Ovary (tissue), 10 donors: ENCODE measurements at regions of chr5 and their contacts with region 1.

Region 1: DNA sequence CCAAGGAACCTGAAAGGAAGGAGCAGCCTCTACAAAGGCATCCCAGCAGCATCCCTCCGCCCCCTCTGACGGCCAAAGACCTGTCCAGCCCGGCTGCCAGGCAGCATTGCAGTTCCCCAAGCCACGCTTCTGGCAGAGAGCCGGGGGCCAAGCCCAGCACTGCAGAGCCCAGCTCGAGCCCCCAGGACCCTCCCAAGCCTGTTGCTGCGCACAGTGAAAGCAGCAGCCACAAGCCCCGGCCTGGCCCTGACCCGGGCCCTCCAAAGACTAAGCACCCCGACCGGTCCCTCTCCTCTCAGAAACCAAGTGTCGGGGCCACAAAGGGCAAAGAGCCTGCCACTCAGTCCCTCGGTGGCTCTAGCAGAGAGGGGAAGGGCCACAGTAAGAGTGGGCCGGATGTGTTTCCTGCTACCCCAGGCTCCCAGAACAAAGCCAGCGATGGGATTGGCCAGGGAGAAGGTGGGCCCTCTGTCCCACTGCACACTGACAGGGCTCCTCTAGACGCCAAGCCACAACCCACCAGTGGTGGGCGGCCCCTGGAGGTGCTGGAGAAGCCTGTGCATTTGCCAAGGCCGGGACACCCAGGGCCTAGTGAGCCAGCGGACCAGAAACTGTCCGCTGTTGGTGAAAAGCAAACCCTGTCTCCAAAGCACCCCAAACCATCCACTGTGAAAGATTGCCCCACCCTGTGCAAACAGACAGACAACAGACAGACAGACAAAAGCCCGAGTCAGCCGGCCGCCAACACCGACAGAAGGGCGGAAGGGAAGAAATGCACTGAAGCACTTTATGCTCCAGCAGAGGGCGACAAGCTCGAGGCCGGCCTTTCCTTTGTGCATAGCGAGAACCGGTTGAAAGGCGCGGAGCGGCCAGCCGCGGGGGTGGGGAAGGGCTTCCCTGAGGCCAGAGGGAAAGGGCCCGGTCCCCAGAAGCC is 30.8 kb downstream of the CD180 start:
- DNase-seq: peak; percentile 71 to 82 (median 77)
- H3K4me3 ChIP-seq: peak overlapping the region; percentile 15
- H3K27ac ChIP-seq: peak overlapping the region in 1 of 2 donors; percentile 26
- H3K4me1 ChIP-seq: no peaks in the 10 kb centered on the region
- H3K27me3 ChIP-seq: no peaks in the 10 kb centered on the region
- CTCF ChIP-seq: peak; percentile 49 to 66 (median 59)
- EP300 ChIP-seq: no peak
- POLR2A ChIP-seq: no peak

Region 2: GRCh38 chr5:66952153-66952552 is 213.6 kb before region 1 on chr5:
- intact Hi-C with region 1: no loop called
- DNase-seq: no peak
- H3K4me3 ChIP-seq: no peak overlapping the region
- H3K27ac ChIP-seq: no peak overlapping the region
- H3K4me1 ChIP-seq: no peaks in the 10 kb centered on the region
- H3K27me3 ChIP-seq: no peaks in the 10 kb centered on the region
- CTCF ChIP-seq: no peak
- EP300 ChIP-seq: no peak
- POLR2A ChIP-seq: no peak

Region 3: DNA sequence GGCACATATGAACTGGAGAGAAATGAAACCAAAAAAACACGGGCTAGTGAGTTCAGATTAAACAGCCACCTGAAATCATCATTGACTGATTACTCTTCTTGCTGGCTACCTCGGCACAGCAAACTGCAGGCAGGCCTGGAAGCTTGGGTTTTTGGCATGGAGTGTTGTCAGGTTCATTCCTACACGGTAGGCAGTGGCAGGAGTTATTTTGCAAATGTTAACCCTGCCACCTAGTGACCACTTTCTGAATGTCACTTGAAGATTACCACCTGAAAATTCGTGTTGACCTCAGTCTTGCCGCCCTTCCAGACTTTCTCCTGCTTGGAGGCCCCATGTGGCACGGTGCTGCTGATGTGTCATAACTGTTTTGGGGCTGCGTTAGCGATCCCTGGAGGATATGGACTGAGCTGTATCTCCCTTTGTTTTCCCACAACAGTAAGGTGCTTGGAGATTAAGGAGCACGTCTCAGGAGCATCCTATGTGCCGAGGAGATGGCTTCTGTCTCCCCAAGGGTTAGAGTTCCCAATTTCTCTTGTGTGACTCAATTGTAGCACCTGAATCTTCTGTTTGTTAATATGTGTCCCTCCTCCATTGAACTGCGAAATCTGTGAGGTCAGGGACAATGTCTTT is 43.5 kb after region 1 on chr5:
- intact Hi-C with region 1: loop called in 2 of 4 experiments (anchors 5 to 10 kb)
- DNase-seq: peak; percentile 48 to 62 (median 55)
- H3K4me3 ChIP-seq: no peak overlapping the region
- H3K27ac ChIP-seq: no peak overlapping the region
- H3K4me1 ChIP-seq: peaks cover 1% of the 10 kb centered on the region
- H3K27me3 ChIP-seq: no peaks in the 10 kb centered on the region
- CTCF ChIP-seq: peak; percentile 45 to 83 (median 76)
- EP300 ChIP-seq: no peak
- POLR2A ChIP-seq: no peak

Region 4: GRCh38 chr5:67215583-67216471 is 50.0 kb after region 1 on chr5:
- intact Hi-C with region 1: loop called in 1 of 4 experiments (anchors 10 kb)
- DNase-seq: peak; percentile 32 to 69 (median 38)
- H3K4me3 ChIP-seq: no peak overlapping the region
- H3K27ac ChIP-seq: no peak overlapping the region
- H3K4me1 ChIP-seq: peaks cover 4% of the 10 kb centered on the region
- H3K27me3 ChIP-seq: no peaks in the 10 kb centered on the region
- CTCF ChIP-seq: no peak
- EP300 ChIP-seq: no peak
- POLR2A ChIP-seq: no peak

Region 5: DNA sequence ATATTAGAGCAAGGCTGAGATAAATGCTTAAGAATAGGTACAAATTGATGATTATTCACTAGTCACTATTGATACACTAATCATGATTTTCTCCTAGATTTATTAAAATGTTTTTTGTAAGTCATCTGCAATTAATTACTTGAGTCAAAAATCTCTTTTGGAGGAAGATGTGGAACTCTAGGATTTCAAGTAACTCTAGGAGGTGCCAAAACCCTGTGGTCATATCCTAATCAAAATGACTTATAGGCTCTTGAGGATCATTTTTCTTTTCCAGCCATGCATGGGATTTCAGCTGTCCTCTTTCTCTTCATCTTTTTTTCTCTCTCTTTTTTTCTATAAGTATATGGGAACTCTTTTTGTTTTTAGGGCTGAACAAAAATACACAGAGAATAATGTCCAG is 172.6 kb after region 1 on chr5:
- intact Hi-C with region 1: no loop called
- DNase-seq: no peak
- H3K4me3 ChIP-seq: no peak overlapping the region
- H3K27ac ChIP-seq: no peak overlapping the region
- H3K4me1 ChIP-seq: no peaks in the 10 kb centered on the region
- H3K27me3 ChIP-seq: no peaks in the 10 kb centered on the region
- CTCF ChIP-seq: no peak
- EP300 ChIP-seq: no peak
- POLR2A ChIP-seq: no peak